ENCODE measurements at regions of chr19 and their contacts with region 1.

Region 1: GRCh38 chr19:4267101-4267900 is 11.8 kb upstream of the SHD start:
- DNase-seq: peak; percentile 89
- H3K4me3 ChIP-seq: peak overlapping the region in 1 of 2 experiments; percentile 12; a peak in 1 of 4 replicates
- H3K27ac ChIP-seq: no peak overlapping the region
- H3K4me1 ChIP-seq: no peaks in the 10 kb centered on the region
- H3K27me3 ChIP-seq: no peaks in the 10 kb centered on the region
- CTCF ChIP-seq: peak; percentile 92
- EP300 ChIP-seq: no peak
- RAD21 ChIP-seq: peak; percentile 76

Region 2: DNA sequence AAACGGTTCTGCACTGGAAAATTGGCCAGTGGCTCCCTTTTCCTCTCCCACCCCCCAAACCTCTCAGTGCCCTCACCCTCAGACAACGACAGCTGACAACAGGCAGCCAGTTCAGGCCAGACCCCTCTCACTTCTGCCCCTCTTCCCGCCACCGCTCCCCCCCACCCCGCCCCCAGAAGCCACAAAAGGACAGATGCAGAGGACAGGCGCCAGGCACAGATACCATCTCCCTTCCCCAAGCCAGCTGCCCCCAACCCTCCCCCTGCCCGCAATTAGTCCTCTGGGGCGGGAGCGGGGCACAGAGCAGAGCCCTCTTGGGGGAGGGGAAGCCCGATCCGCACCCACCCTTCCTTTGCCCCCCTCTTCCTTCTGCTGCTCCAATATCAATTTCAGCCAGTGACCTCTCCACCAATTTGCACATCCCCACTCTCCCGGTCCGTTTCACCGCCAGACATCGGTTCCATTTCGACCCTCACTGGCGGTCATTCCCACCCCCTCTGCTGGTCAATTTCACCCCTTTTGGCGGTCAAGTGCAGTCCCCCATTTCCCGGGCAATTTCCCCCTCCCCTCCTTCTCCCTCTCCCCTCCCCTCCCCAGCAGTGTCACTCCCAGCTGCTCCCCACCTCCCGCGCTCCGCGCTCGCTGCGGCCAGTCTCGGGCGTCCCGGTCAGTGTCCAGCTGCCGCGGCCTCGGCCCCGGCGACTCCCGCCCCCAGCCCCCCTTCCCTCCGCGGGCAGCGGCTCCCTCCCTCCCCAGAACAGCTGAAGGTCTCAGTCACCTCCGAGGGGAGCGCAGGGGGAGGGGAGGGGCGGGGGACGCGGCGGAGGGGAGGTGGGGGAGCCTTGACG is 11.3 kb after region 1 on chr19 and contains the start of gene SHD:
- CTCF ChIA-PET with region 1: interaction called, 60 read pairs
- POLR2A ChIA-PET with region 1: interaction called, 7 read pairs
- DNase-seq: peak; percentile 92
- H3K4me3 ChIP-seq: peak within 1 kb of the TSS; percentile 49 to 50; a peak in 3 of 4 replicates
- H3K27ac ChIP-seq: peak within 1 kb of the TSS; percentile 50 to 99; a peak in 3 of 4 replicates
- H3K4me1 ChIP-seq: peaks cover 0 to 12% of the 10 kb centered on the region in 2 experiments; a peak in 1 of 4 replicates
- H3K27me3 ChIP-seq: peaks cover 12% of the 10 kb centered on the region
- CTCF ChIP-seq: no peak
- EP300 ChIP-seq: peak in 1 of 2 experiments; percentile 87; a peak in 1 of 4 replicates
- RAD21 ChIP-seq: no peak
- polyA plus RNA-seq, gene SHD: 3.1 and 6.9 TPM in 2 replicates

Region 3: DNA sequence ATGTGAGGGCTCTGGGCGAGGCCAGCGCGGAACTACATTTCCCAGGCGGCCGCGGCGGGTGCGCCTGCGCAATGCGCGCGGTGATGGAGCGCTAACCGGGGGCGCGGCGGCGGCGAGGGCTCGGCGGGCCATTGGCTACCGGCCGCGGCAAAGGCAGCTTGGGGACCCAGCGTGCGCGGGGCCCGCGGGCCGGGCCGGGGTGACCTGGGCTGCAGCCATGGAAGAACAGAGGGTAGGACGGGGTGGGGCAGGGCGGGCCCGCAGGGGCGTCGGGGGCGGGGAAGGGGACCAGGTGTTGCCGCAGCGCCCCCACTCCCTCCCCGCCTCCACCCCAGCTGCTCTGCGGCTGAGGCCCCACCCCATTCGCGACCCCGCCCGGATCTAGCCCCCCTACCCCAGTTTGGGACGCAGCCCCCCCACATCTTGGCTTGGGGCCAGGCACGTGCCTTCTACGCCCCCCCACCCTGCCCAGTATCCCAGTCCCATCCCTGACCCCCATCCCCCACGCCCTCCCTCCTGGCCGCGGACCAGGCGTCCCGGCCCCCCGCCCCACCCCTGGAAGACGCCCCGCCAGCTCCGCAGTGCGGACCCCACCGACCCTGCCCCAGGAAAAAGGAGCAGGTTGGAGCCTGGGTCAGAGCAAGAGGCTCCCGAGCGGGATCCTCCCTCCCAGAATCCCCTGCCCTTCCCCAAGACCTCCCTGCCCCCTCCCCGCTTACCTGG is 37.4 kb after region 1 on chr19 and contains the start of gene FSD1:
- CTCF ChIA-PET with region 1: interaction called, 22 read pairs
- POLR2A ChIA-PET with region 1: interaction called, 3 read pairs
- DNase-seq: peak; percentile 99
- H3K4me3 ChIP-seq: peak within 1 kb of the TSS; percentile 43 to 51; a peak in 3 of 4 replicates
- H3K27ac ChIP-seq: no peak within 1 kb of the TSS; a peak in 1 of 4 replicates
- H3K4me1 ChIP-seq: peaks cover 0 to 16% of the 10 kb centered on the region in 2 experiments; a peak in 1 of 4 replicates
- H3K27me3 ChIP-seq: no peaks in the 10 kb centered on the region
- CTCF ChIP-seq: no peak
- EP300 ChIP-seq: no peak
- RAD21 ChIP-seq: no peak
- polyA plus RNA-seq, gene FSD1: 46.7 and 49.0 TPM in 2 replicates

Region 4: DNA sequence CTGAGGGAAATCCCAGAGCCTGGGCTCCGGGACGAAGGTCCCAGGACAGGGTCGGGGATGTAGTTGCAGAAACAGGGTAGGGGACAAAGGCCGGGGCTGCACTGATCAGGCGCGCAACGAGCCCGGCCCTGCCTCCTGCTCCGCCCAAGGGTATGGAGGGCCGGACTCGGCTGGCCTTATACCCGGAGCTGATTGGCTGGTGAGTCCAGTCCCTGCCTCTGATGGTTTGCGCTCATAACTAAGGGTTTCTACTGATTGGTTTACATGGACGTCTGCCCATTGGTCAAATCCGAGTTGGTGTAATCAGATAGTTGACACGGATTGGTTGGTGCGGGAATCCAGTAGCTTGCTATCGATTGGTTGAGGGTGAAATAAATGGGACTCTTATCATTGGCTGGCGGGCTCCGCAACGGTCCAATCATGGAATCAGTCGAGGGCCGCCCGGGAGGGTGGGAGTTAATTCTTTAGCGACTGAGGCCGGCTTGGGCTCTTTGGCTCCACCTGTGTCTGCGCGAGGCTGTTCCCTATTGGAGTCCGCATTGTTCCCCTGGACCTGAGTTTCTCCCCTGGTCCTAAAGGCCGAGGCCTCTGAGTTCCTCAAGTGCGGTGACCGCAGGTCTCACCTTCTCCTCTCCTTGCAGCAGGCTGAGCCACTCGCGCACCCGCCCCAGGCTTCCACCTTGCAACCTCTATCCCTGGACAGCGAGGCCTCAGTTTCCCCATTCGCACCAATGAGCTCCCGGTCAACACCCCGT is 75.5 kb after region 1 on chr19:
- CTCF ChIA-PET with region 1: interaction called, 130 read pairs
- POLR2A ChIA-PET with region 1: interaction called, 20 read pairs
- DNase-seq: peak; percentile 92
- H3K4me3 ChIP-seq: peak overlapping the region; percentile 63 to 69
- H3K27ac ChIP-seq: peak overlapping the region; percentile 72 to 91
- H3K4me1 ChIP-seq: peaks cover 0 to 11% of the 10 kb centered on the region in 2 experiments; a peak in 1 of 4 replicates
- H3K27me3 ChIP-seq: no peaks in the 10 kb centered on the region
- CTCF ChIP-seq: peak; percentile 35; the same call in 1 of the 2 replicates
- EP300 ChIP-seq: no peak
- RAD21 ChIP-seq: peak; percentile 21; the same call in 1 of the 2 replicates

Region 5: DNA sequence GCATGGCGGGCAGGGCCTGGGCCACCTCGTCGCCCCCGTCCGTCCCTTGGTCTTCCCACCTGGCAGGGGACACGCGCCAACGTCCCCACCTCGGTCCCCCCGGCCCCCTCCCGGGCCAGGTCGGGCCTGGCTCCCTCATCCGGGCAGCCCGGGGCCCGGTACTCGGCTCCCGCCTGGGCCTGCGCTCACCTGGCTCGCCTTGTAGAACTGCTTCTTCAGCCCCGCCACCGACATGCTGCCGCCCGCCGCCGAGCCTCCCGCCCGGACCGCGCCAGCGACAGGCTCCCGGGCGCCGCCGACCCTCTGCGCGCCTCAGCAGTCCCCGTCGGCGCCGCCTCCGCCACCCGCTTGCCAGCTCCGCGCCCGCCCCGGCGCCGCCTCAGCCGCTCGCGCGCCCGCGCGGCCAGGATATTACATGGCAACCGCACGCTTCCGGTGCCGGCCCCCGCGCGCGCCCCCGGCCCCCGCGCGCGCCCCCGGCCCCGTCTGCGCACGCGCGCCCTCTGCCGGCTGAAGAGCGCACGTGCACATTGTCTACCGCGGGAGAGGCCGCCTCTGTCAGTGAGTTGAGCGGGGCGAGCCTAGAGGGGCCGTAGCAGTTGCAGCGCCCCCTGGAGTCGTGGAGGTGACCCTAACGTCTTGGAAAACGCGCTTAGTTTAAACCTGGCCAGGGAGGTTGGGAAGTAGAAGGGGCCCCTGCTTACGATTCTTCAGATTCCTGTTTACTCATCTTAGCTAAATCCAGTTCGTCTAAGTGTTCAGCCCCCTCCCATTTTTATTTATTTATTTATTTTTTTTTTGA is 133.0 kb after region 1 on chr19 and contains the start of gene SH3GL1:
- CTCF ChIA-PET with region 1: interaction called, 31 read pairs
- POLR2A ChIA-PET with region 1: interaction called, 4 read pairs
- DNase-seq: peak; percentile 92
- H3K4me3 ChIP-seq: peak within 1 kb of the TSS; percentile 70 to 82
- H3K27ac ChIP-seq: peak within 1 kb of the TSS; percentile 68 to 85
- H3K4me1 ChIP-seq: peaks cover 11 to 14% of the 10 kb centered on the region in 2 experiments; a peak in 3 of 4 replicates
- H3K27me3 ChIP-seq: no peaks in the 10 kb centered on the region
- CTCF ChIP-seq: peak; percentile 94
- EP300 ChIP-seq: peak in 1 of 2 experiments; percentile 14; a peak in 1 of 4 replicates
- RAD21 ChIP-seq: peak; percentile 50
- polyA plus RNA-seq, gene SH3GL1: 62.5 and 82.8 TPM in 2 replicates

Measured in SK-N-SH (cell line).